Activated CD4-positive, alpha-beta T cell treated with anti-CD3 and anti-CD28 coated beads, Interleukin-2, amount 10 ng/mL, durations not matched to agents 24 days and 14 days (primary cell): ENCODE measurements at regions of chr5 and their contacts with region 1.

Region 1: DNA sequence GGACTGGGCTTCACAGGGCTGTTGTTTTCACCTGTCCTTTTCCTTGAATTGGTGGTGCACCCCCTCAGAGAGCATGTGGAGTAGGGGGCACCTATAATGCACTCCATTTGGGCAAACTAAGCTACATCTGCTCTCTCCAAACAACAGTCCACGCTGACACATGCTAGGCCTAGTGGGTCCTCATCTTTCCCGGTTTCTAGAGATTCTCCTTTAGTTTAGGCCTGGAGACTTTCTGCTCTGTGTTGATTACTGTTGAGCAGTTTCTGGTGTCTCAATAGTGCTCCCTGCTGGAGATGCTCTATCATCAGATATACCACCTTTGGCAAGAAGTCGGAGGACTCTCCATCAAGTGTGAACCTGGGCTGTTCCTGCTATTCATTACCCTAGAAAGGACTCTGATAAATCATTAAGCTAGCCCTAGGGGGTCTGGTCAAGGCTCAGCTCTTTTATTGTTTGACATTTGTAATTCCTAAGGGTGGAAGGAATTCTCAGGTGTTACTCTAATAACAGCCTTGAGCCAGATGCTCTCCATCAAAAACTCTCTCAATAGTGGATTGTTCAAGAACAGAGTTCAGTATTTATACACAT is 64.0 kb upstream of the FYB1 start:
- DNase-seq: peak; percentile 90
- H3K4me3 Mint-ChIP-seq: no peak overlapping the region
- H3K27ac Mint-ChIP-seq: peak overlapping the region; percentile 62
- H3K4me1 Mint-ChIP-seq: peaks cover 14% of the 10 kb centered on the region
- H3K27me3 Mint-ChIP-seq: peaks cover 11% of the 10 kb centered on the region

Region 2: GRCh38 chr5:38994324-38994927 is 288.9 kb before region 1 on chr5:
- intact Hi-C with region 1: loop called (anchors 5 kb)
- DNase-seq: peak; percentile 75
- H3K4me3 Mint-ChIP-seq: no peak overlapping the region
- H3K27ac Mint-ChIP-seq: no peak overlapping the region
- H3K4me1 Mint-ChIP-seq: peaks cover 9% of the 10 kb centered on the region
- H3K27me3 Mint-ChIP-seq: no peaks in the 10 kb centered on the region

Region 3: GRCh38 chr5:39148983-39149534 is 134.3 kb before region 1 on chr5:
- intact Hi-C with region 1: loop called (anchors 1 kb)
- DNase-seq: no peak
- H3K4me3 Mint-ChIP-seq: no peak overlapping the region
- H3K27ac Mint-ChIP-seq: peak overlapping the region; percentile 68
- H3K4me1 Mint-ChIP-seq: peaks cover 43% of the 10 kb centered on the region
- H3K27me3 Mint-ChIP-seq: no peaks in the 10 kb centered on the region